Naive thymus-derived CD4-positive, alpha-beta T cell (primary cell): ENCODE measurements at regions of chr4 and their contacts with region 1.

Region 1: GRCh38 chr4:173013232-173013930 is 155.2 kb upstream of the GALNT7 start:
- DNase-seq: peak; percentile 12 to 64 (median 50)
- ATAC-seq: peak; percentile 77
- H3K4me3 ChIP-seq: no peak overlapping the region
- H3K4me3 Mint-ChIP-seq: no peak overlapping the region
- H3K27ac ChIP-seq: no peak overlapping the region
- H3K27ac Mint-ChIP-seq: no peak overlapping the region
- H3K4me1 ChIP-seq: no peaks in the 10 kb centered on the region
- H3K4me1 Mint-ChIP-seq: peaks cover 0 to 4% (median 0%) of the 10 kb centered on the region in 7 donors
- H3K27me3 ChIP-seq: no peaks in the 10 kb centered on the region
- H3K27me3 Mint-ChIP-seq: peaks cover 0 to 5% (median 0%) of the 10 kb centered on the region in 5 donors

Region 2: GRCh38 chr4:173025131-173025530 is 11.8 kb after region 1 on chr4:
- CTCF ChIA-PET with region 1: interaction called, 16 read pairs
- POLR2A ChIA-PET with region 1: no interaction called
- intact Hi-C with region 1: no loop called
- DNase-seq: peak in 7 of 9 donors; percentile 10 to 50 (median 42)
- ATAC-seq: peak; percentile 67
- H3K4me3 ChIP-seq: no peak overlapping the region
- H3K4me3 Mint-ChIP-seq: no peak overlapping the region
- H3K27ac ChIP-seq: no peak overlapping the region
- H3K27ac Mint-ChIP-seq: no peak overlapping the region
- H3K4me1 ChIP-seq: no peaks in the 10 kb centered on the region
- H3K4me1 Mint-ChIP-seq: peaks cover 0 to 4% (median 0%) of the 10 kb centered on the region in 7 donors
- H3K27me3 ChIP-seq: no peaks in the 10 kb centered on the region
- H3K27me3 Mint-ChIP-seq: peaks cover 0 to 7% (median 5%) of the 10 kb centered on the region in 5 donors

Region 3: GRCh38 chr4:173257732-173258717 is 244.6 kb after region 1 on chr4:
- CTCF ChIA-PET with region 1: interaction called, 67 read pairs
- POLR2A ChIA-PET with region 1: interaction called, 3 read pairs
- intact Hi-C with region 1: loop called (anchors 1 kb)
- DNase-seq: peak in 8 of 9 donors; percentile 26 to 62 (median 48)
- ATAC-seq: peak; percentile 83
- H3K4me3 ChIP-seq: no peak overlapping the region
- H3K4me3 Mint-ChIP-seq: no peak overlapping the region
- H3K27ac ChIP-seq: no peak overlapping the region
- H3K27ac Mint-ChIP-seq: no peak overlapping the region
- H3K4me1 ChIP-seq: no peaks in the 10 kb centered on the region
- H3K4me1 Mint-ChIP-seq: peaks cover 0 to 12% (median 5%) of the 10 kb centered on the region in 7 donors
- H3K27me3 ChIP-seq: no peaks in the 10 kb centered on the region
- H3K27me3 Mint-ChIP-seq: no peaks in the 10 kb centered on the region

Region 4: GRCh38 chr4:173301518-173302201 is 288.3 kb after region 1 on chr4:
- CTCF ChIA-PET with region 1: interaction called, 32 read pairs
- POLR2A ChIA-PET with region 1: no interaction called
- intact Hi-C with region 1: loop called (anchors 1 kb)
- DNase-seq: peak in 5 of 9 donors; percentile 16 to 39 (median 27)
- ATAC-seq: peak; percentile 51
- H3K4me3 ChIP-seq: no peak overlapping the region
- H3K4me3 Mint-ChIP-seq: no peak overlapping the region
- H3K27ac ChIP-seq: no peak overlapping the region
- H3K27ac Mint-ChIP-seq: peak overlapping the region in 1 of 9 donors; percentile 43
- H3K4me1 ChIP-seq: no peaks in the 10 kb centered on the region
- H3K4me1 Mint-ChIP-seq: peaks cover 0 to 9% (median 0%) of the 10 kb centered on the region in 7 donors
- H3K27me3 ChIP-seq: no peaks in the 10 kb centered on the region
- H3K27me3 Mint-ChIP-seq: no peaks in the 10 kb centered on the region

Region 5: GRCh38 chr4:173360587-173361221 is 347.3 kb after region 1 on chr4:
- CTCF ChIA-PET with region 1: no interaction called
- POLR2A ChIA-PET with region 1: no interaction called
- intact Hi-C with region 1: loop called in 1 of 2 experiments (anchors 1 kb)
- DNase-seq: no peak
- ATAC-seq: no peak
- H3K4me3 ChIP-seq: no peak overlapping the region
- H3K4me3 Mint-ChIP-seq: no peak overlapping the region
- H3K27ac ChIP-seq: no peak overlapping the region
- H3K27ac Mint-ChIP-seq: no peak overlapping the region
- H3K4me1 ChIP-seq: no peaks in the 10 kb centered on the region
- H3K4me1 Mint-ChIP-seq: peaks cover 0 to 17% (median 6%) of the 10 kb centered on the region in 7 donors
- H3K27me3 ChIP-seq: no peaks in the 10 kb centered on the region
- H3K27me3 Mint-ChIP-seq: peaks cover 0 to 8% (median 6%) of the 10 kb centered on the region in 5 donors

Region 6: DNA sequence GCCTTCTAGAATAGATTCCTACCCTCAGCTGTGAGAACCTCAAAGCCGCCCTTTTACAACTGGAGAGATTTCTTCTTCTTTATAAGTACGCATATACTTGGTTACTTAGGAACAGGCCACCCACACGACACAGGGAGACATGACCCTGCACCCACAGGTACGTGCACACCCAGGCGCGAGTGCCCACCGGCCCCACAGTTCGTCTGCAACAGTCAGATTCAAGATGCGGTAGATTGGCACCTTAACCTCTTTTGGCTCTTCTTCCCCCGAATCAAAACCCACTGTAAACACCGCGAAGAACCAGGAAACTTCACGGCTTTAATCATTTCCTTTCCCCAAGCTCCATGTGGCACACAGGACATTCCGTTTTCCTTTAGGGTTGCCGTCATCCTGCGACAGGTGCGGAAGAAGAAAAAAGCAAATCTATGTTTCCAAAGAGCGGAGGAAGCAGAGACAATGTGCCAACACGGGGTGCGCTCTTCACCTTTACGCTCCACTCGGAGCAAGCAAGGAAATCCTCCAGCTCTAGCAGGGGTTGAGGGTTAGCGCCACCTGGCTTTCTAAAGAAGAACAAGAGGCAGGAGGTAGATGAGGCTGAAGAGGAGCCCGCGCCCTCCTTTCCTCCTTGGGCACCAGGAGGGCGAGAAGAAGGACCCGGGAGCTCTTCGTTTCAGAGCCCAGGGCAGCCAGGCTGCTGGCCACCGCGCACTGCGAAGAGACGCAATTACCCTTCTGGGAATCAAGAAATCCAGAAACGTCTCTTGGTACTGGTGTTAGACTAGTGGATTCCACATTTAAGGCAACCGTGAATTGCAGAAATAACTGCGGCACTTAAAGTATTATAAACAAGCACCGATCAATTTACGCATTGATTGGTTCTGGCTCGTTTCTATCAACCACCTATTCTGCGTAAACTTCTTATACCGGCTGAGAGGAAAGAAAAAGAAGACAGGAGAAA is 480.9 kb after region 1 on chr4:
- CTCF ChIA-PET with region 1: no interaction called
- POLR2A ChIA-PET with region 1: no interaction called
- intact Hi-C with region 1: loop called (anchors 1 to 5 kb)
- DNase-seq: peak in 8 of 9 donors; percentile 43 to 71 (median 56)
- ATAC-seq: peak; percentile 96
- H3K4me3 ChIP-seq: peak overlapping the region; percentile 44
- H3K4me3 Mint-ChIP-seq: peak overlapping the region; percentile 74 to 92 (median 85)
- H3K27ac ChIP-seq: no peak overlapping the region
- H3K27ac Mint-ChIP-seq: peak overlapping the region in 1 of 9 donors; percentile 50
- H3K4me1 ChIP-seq: peaks cover 3 to 9% of the 10 kb centered on the region in 2 donors
- H3K4me1 Mint-ChIP-seq: peaks cover 9 to 35% (median 15%) of the 10 kb centered on the region in 7 donors
- H3K27me3 ChIP-seq: no peaks in the 10 kb centered on the region
- H3K27me3 Mint-ChIP-seq: peaks cover 40 to 71% (median 50%) of the 10 kb centered on the region in 5 donors

Region 7: GRCh38 chr4:173769568-173769967 is 756.2 kb after region 1 on chr4:
- CTCF ChIA-PET with region 1: no interaction called
- POLR2A ChIA-PET with region 1: no interaction called
- intact Hi-C with region 1: no loop called
- DNase-seq: no peak
- ATAC-seq: no peak
- H3K4me3 ChIP-seq: no peak overlapping the region
- H3K4me3 Mint-ChIP-seq: no peak overlapping the region
- H3K27ac ChIP-seq: no peak overlapping the region
- H3K27ac Mint-ChIP-seq: no peak overlapping the region
- H3K4me1 ChIP-seq: no peaks in the 10 kb centered on the region
- H3K4me1 Mint-ChIP-seq: no peaks in the 10 kb centered on the region
- H3K27me3 ChIP-seq: no peaks in the 10 kb centered on the region
- H3K27me3 Mint-ChIP-seq: no peaks in the 10 kb centered on the region